A673 (cell line): ENCODE measurements at regions of chr7 and their contacts with region 1.

Region 1: GRCh38 chr7:152544481-152544927 is 108.7 kb upstream of the KMT2C start:
- DNase-seq: no peak
- H3K4me3 ChIP-seq: no peak overlapping the region
- H3K27ac ChIP-seq: no peak overlapping the region
- H3K4me1 ChIP-seq: no peaks in the 10 kb centered on the region
- H3K27me3 ChIP-seq: no peaks in the 10 kb centered on the region
- CTCF ChIP-seq: no peak

Region 2: GRCh38 chr7:152463709-152464311 is 80.7 kb before region 1 on chr7:
- CTCF ChIA-PET with region 1: no interaction called
- POLR2A ChIA-PET with region 1: no interaction called
- intact Hi-C with region 1: no loop called
- DNase-seq: peak; percentile 99
- H3K4me3 ChIP-seq: peak overlapping the region; percentile 100
- H3K27ac ChIP-seq: peak overlapping the region; percentile 96
- H3K4me1 ChIP-seq: no peaks in the 10 kb centered on the region
- H3K27me3 ChIP-seq: no peaks in the 10 kb centered on the region
- CTCF ChIP-seq: no peak

Region 3: DNA sequence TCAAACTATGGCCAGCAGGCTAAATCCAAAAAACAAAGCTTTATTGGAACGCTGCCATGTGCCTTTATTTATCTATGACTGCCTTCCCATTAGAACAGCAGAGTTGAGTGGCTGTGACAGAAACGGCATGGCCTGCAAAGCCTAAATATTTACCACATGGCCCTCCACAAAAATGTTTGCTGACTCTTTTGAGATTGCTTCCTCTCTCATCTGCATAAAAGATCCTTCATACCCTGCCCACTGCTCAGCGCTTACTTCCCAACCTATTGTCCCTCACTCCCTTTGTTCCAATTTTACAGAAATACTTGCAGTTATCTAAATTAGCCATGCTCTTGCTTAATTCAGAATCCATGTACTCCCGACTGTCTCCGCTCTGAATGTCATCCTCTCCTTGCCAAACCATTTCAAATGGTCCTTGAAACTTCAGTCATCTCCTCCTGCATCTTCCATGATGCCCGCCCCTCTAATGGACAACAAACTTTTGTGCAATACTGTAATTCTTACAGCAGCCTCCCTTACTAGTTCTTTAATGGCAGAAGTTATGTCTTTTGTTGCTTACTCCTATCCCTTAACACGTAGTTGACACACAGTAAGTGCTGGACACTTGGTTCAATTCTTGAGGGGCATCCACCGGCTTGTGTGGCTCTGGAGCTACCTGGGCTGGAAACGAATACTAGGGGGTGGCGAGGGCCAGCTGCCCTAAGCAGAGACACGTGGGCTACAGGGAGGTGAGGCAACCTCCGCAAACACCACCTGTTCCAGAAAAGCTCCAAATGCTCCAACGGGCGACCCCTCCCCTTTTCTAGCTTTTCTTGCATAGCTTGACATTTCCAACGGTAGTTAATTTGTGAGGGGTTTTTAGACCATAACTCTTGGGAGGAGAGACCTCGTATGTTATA is 130.6 kb after region 1 on chr7:
- CTCF ChIA-PET with region 1: interaction called, 20 read pairs
- POLR2A ChIA-PET with region 1: no interaction called
- intact Hi-C with region 1: no loop called
- DNase-seq: peak; percentile 74
- H3K4me3 ChIP-seq: peak overlapping the region; percentile 89
- H3K27ac ChIP-seq: peak overlapping the region; percentile 88
- H3K4me1 ChIP-seq: no peaks in the 10 kb centered on the region
- H3K27me3 ChIP-seq: no peaks in the 10 kb centered on the region
- CTCF ChIP-seq: no peak

Region 4: DNA sequence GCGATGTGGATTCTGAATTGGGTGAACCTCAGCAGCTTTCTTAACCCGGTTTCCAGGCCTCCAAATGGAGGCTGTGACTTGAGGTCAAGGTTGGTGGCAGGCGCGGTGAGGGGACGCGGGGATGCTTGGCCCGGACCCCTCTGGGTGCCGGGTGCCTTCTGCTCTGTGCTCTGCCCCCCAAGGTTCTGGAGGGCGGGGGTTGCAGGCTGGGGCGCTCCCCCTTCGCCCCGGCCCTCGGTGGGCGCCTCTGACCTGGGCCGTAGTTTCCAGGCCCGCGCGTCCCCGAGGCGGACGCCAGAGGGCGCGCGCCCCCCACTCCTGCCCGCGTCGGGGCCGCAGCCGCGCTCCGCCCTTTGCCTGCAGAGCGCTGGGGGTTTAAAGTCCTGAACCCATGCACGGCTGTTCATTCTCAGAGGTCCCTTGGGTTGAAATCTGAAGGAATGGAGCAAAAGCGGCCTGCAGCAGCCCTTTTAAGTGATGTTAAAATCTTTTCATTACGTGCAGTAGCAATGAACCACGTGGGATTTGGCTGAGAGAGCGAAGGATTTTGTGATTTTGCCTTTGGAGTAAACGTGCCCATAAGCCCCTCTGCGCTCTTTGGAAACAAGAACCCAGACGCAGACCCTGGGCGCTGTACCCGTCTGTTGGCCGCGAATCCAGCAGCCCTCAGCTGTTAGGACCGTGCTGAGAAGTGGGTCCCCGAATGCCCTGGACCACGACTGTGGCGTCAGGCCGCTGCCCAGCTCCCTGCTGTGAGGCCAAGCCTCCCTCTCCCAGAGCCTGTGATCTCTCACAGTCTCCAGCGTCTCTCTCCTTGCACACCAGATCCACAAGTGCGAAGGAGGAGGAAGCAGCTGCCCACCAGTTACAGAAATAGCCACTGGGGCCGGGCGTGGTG is 350.0 kb after region 1 on chr7:
- CTCF ChIA-PET with region 1: no interaction called
- POLR2A ChIA-PET with region 1: no interaction called
- intact Hi-C with region 1: no loop called
- DNase-seq: peak; percentile 44
- H3K4me3 ChIP-seq: no peak overlapping the region
- H3K27ac ChIP-seq: no peak overlapping the region
- H3K4me1 ChIP-seq: peaks cover 1% of the 10 kb centered on the region
- H3K27me3 ChIP-seq: peaks cover 10% of the 10 kb centered on the region
- CTCF ChIP-seq: peak; percentile 73